Mammary epithelial cell (primary cell): ENCODE measurements at regions of chr2 and their contacts with region 1.

Region 1: GRCh38 chr2:68594674-68595492 is 48.5 kb upstream of the PROKR1 start:
- DNase-seq: peak; percentile 25
- H3K4me3 ChIP-seq: no peak overlapping the region
- H3K27ac ChIP-seq: no peak overlapping the region
- H3K4me1 ChIP-seq: no peaks in the 10 kb centered on the region
- H3K27me3 ChIP-seq: no peaks in the 10 kb centered on the region
- CTCF ChIP-seq: peak; percentile 89 to 95

Region 2: GRCh38 chr2:68169297-68169696 is 425.6 kb before region 1 on chr2:
- CTCF ChIA-PET with region 1: no interaction called
- dilution Hi-C with region 1: no loop called
- in situ Hi-C with region 1: no loop called
- intact Hi-C with region 1: no loop called
- DNase-seq: no peak
- H3K4me3 ChIP-seq: no peak overlapping the region
- H3K27ac ChIP-seq: no peak overlapping the region
- H3K4me1 ChIP-seq: peaks cover 11% of the 10 kb centered on the region
- H3K27me3 ChIP-seq: no peaks in the 10 kb centered on the region
- CTCF ChIP-seq: peak in 1 of 2 donors; percentile 19

Region 3: DNA sequence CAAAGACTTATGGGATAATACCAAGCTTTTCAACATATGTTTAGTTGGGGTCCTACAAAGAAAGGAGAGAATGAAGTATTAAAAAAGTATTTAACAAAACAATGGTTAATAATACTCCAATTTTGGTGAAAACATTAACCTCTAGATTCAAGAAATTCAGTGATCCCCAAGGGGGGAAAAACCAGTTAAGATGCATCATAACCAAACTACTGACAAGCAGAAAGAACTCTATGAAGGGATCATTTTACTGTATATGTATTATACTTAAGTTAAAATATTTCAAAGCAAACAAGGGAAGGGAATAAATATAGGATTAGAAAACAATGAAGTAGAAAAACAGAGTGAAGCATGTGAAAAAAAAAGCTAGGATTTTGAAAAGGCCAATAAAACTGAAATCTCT is 283.9 kb before region 1 on chr2:
- CTCF ChIA-PET with region 1: interaction called, 10 read pairs
- dilution Hi-C with region 1: no loop called
- in situ Hi-C with region 1: no loop called
- intact Hi-C with region 1: no loop called
- DNase-seq: no peak
- H3K4me3 ChIP-seq: no peak overlapping the region
- H3K27ac ChIP-seq: no peak overlapping the region
- H3K4me1 ChIP-seq: no peaks in the 10 kb centered on the region
- H3K27me3 ChIP-seq: peaks cover 7% of the 10 kb centered on the region
- CTCF ChIP-seq: no peak

Region 4: DNA sequence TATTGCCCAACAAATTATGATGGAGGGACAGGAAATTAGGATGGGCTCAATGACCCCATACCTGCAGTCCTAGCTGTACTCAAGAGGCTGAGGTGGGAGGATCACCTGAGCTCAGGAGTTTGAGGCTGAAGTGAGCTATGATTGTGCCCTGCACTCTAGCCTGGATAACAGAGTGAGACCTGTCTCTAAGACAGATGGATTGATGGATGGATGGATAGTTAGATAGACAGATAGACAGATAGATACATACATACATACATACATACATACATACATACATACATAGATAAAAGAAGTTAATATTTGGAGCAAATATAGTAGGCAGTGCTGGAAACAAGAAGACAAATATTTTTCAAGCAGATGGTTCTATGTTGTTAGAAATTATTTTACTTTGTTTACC is 29.6 kb before region 1 on chr2:
- CTCF ChIA-PET with region 1: interaction called, 11 read pairs
- dilution Hi-C with region 1: no loop called
- in situ Hi-C with region 1: no loop called
- intact Hi-C with region 1: no loop called
- DNase-seq: no peak
- H3K4me3 ChIP-seq: no peak overlapping the region
- H3K27ac ChIP-seq: peak overlapping the region; percentile 67
- H3K4me1 ChIP-seq: peaks cover 31% of the 10 kb centered on the region
- H3K27me3 ChIP-seq: no peaks in the 10 kb centered on the region
- CTCF ChIP-seq: no peak

Region 5: DNA sequence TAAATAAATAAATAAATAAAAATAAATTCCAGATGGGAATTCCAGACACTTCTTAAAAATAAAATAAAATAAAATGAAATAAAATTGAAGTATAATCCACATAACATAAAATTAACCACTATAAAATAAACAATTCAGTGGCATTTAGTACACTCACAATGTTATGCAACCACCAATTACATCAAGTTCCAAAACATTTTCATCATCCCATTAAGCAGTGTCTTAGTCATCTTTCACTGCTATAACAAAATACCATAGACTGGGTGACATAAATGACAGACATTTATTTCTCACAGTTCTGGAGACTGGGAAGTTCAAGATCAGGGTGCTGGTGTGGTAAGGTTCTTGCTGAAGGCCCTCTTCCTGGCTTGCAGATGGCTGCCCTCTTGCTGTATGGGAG is 25.9 kb after region 1 on chr2:
- CTCF ChIA-PET with region 1: no interaction called
- dilution Hi-C with region 1: no loop called
- in situ Hi-C with region 1: no loop called
- intact Hi-C with region 1: no loop called
- DNase-seq: no peak
- H3K4me3 ChIP-seq: no peak overlapping the region
- H3K27ac ChIP-seq: no peak overlapping the region
- H3K4me1 ChIP-seq: no peaks in the 10 kb centered on the region
- H3K27me3 ChIP-seq: no peaks in the 10 kb centered on the region
- CTCF ChIP-seq: no peak

Region 6: GRCh38 chr2:68637047-68637446 is 42.2 kb after region 1 on chr2:
- CTCF ChIA-PET with region 1: no interaction called
- dilution Hi-C with region 1: loop called (anchors 5 kb)
- in situ Hi-C with region 1: no loop called
- intact Hi-C with region 1: no loop called
- DNase-seq: no peak
- H3K4me3 ChIP-seq: no peak overlapping the region
- H3K27ac ChIP-seq: no peak overlapping the region
- H3K4me1 ChIP-seq: no peaks in the 10 kb centered on the region
- H3K27me3 ChIP-seq: no peaks in the 10 kb centered on the region
- CTCF ChIP-seq: no peak